Ovary (tissue), 10 donors: ENCODE measurements at regions of chr6 and their contacts with region 1.

Region 1: GRCh38 chr6:162615016-162615705 is 112.4 kb downstream of the PRKN start:
- DNase-seq: peak in 3 of 5 donors; percentile 17 to 38 (median 32)
- H3K4me3 ChIP-seq: no peak overlapping the region
- H3K27ac ChIP-seq: peak overlapping the region in 1 of 2 donors; percentile 29
- H3K4me1 ChIP-seq: peaks cover 2% of the 10 kb centered on the region
- H3K27me3 ChIP-seq: no peaks in the 10 kb centered on the region
- CTCF ChIP-seq: no peak
- EP300 ChIP-seq: no peak
- POLR2A ChIP-seq: no peak

Region 2: GRCh38 chr6:162640756-162641155 is 25.6 kb after region 1 on chr6:
- intact Hi-C with region 1: loop called in 1 of 4 experiments (anchors 1 kb)
- DNase-seq: no peak
- H3K4me3 ChIP-seq: no peak overlapping the region
- H3K27ac ChIP-seq: no peak overlapping the region
- H3K4me1 ChIP-seq: no peaks in the 10 kb centered on the region
- H3K27me3 ChIP-seq: no peaks in the 10 kb centered on the region
- CTCF ChIP-seq: no peak
- EP300 ChIP-seq: no peak
- POLR2A ChIP-seq: no peak

Region 3: GRCh38 chr6:163455552-163455951 is 840.4 kb after region 1 on chr6:
- intact Hi-C with region 1: no loop called
- DNase-seq: no peak
- H3K4me3 ChIP-seq: no peak overlapping the region
- H3K27ac ChIP-seq: no peak overlapping the region
- H3K4me1 ChIP-seq: peaks cover 7% of the 10 kb centered on the region
- H3K27me3 ChIP-seq: no peaks in the 10 kb centered on the region
- CTCF ChIP-seq: no peak
- EP300 ChIP-seq: no peak
- POLR2A ChIP-seq: no peak